ENCODE measurements at regions of chr17 and their contacts with region 1.

Region 1: GRCh38 chr17:55735731-55736405 is 13.2 kb upstream of the TMEM100 start:
- DNase-seq: no peak
- H3K4me3 ChIP-seq: no peak overlapping the region
- H3K27me3 ChIP-seq: 0 out of 2 replicates have a peak, but pooled peaks cover 1% of the 10 kb centered on the region
- CTCF ChIP-seq: peak; percentile 81

Region 2: GRCh38 chr17:55576996-55577586 is 158.8 kb before region 1 on chr17:
- CTCF ChIA-PET with region 1: no interaction called
- POLR2A ChIA-PET with region 1: interaction called, 21 read pairs
- DNase-seq: peak; percentile 45
- H3K4me3 ChIP-seq: peak overlapping the region; percentile 2
- H3K27me3 ChIP-seq: no peaks in the 10 kb centered on the region
- CTCF ChIP-seq: no peak

Region 3: DNA sequence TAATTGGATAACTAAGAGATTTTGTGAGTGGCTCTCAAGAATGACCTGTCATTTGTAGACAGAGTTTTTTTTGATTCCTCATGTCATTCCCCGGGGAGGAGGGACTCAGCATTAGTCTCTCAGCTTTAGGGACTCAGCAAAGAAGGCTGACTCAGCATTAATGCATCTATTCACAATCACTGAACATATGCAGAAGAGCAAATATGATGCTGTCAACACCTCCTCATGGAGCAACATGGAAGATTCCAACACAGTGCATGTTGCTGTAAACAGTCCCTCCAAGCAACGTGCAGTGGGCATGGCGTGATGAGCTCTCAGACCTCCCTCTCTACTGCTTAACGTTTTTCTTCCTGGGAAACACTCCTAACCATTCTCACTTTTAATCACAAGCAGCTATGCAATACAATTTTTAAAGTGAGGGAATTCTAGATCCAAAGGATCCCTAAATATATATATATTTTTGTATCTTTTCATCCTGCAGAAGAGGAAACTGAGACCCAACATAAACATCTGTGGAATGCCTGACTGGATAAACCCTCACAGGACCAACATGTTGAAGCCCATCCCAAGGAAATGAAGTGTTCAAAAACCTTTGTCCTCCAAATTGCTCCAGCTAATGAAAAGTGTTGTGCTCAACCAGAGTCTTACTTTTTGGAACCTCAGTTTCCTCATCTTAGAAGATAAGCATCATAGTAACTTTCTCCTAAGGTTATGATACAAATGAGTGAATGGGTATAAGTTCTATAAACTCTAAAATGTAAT is 52.1 kb before region 1 on chr17:
- CTCF ChIA-PET with region 1: no interaction called
- POLR2A ChIA-PET with region 1: no interaction called
- DNase-seq: no peak
- H3K4me3 ChIP-seq: no peak overlapping the region
- H3K27me3 ChIP-seq: no peaks in the 10 kb centered on the region
- CTCF ChIP-seq: no peak

Region 4: DNA sequence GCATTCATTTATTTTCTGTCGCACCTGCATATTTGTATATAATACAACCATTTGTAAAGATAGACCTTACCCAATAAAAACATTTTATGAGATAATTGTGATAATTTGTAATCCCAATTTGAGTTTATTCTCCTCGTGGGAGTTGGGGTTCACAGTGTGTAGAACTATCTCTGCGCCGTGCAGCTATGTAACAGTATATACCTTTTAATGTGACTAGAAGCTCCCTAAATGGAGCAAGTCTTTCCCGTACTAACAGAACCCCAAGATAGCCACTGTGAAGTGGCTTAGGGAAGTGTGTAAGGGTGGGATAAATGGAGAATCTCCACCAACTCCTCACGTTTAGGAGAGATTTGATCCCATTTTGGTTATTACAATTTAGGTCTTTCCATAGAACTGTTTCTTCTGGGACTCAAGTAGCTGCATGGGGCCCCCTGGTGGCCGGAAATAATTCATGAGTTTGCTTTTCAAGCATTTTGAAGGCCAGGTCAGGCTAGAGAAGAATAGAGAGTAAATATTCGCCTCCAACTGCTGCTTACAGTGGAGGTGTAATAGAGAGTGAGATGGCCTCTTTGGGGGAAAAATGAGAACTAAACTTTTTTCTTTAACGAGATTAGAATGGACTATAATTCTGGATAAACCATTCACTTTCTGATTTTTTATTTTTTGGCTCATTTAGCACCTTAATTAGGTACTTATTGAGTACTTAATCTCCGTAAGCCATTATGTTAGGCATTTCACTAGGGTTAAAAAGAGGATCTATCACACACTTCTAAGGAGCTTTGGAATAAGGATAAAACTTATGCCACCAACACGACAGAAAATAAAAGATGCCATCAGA is 17.8 kb before region 1 on chr17:
- CTCF ChIA-PET with region 1: interaction called, 26 read pairs
- POLR2A ChIA-PET with region 1: no interaction called
- DNase-seq: no peak
- H3K4me3 ChIP-seq: no peak overlapping the region
- H3K27me3 ChIP-seq: 0 out of 2 replicates have a peak, but pooled peaks cover 1% of the 10 kb centered on the region
- CTCF ChIP-seq: peak; percentile 78

Region 5: DNA sequence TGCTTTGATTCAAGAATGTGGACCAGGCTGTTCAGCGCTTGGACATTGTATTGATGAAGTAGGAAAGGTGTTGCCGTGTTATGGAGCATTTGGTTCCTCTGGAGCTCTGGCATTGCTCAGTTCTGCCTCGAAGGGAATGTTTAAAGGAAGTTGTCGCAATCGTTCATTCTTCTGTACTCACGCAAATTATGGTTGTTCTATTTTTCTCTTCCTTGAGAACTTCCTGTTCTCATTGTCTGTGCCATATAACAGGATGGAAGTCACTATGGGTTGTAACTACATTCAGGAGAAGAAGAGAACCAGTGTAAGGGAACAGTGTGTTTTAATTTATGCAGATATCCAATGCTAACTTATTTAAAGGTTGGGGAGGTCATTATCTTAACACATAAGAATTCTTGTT is 28.0 kb after region 1 on chr17:
- CTCF ChIA-PET with region 1: interaction called, 11 read pairs
- POLR2A ChIA-PET with region 1: no interaction called
- DNase-seq: no peak
- H3K4me3 ChIP-seq: no peak overlapping the region
- H3K27me3 ChIP-seq: no peaks in the 10 kb centered on the region
- CTCF ChIP-seq: no peak

Measured in BJ (cell line).